K562 (cell line): ENCODE measurements at regions of chr12 and their contacts with region 1.

Region 1: DNA sequence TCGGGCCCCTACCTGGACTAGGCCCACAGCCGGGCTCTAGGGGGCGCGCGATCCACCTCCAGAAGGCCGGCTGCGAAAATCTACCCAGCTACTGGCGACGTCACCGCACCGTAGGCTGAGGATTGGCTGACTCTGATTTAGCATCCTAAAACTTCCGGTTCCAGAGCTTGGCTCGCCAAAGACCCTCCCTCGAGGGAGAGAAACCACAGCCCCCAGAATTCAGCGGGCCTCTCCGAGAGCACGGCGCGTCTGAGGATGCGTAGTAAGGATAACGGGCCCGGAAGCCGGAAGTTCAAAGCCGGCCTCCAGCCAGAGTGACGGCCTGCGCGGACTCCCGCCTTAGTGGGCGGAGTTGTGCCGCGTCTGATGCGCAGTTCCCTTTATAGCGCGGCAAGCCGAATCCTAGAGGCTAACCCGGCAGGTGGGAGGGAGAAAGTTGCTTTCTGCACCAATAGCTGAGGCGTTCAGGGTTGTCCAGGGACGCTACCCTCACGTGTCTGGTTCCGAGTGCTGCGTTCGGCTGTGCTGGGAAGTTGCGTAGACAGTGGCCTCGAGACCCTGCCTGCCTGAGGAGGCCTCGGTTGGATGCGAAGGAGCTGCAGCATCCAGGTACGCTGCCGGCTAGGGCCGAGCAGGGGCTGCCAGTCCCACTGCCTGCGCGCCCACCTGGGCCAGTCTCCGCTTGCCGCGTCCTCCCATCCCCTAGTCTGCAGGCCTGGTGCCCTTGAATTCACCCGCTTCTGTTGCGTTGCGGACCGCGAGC is at the start of gene COX14:
- DNase-seq: peak; percentile 93 to 99 (median 96)
- ATAC-seq: peak; percentile 92
- H3K4me3 ChIP-seq: peak within 1 kb of the TSS; percentile 78
- H3K27ac ChIP-seq: peak within 1 kb of the TSS; percentile 87
- H3K4me1 ChIP-seq: peaks cover 29 to 48% of the 10 kb centered on the region in 2 experiments
- H3K27me3 ChIP-seq: no peaks in the 10 kb centered on the region
- CTCF ChIP-seq: peak; percentile 90 to 96 (median 95)
- EP300 ChIP-seq: no peak
- POLR2A ChIP-seq: peak; percentile 90
- RAD21 ChIP-seq: peak in 1 of 2 experiments; percentile 52; a peak in 2 of 4 replicates
- polyA plus RNA-seq, gene COX14: 259 to 269 TPM

Region 2: DNA sequence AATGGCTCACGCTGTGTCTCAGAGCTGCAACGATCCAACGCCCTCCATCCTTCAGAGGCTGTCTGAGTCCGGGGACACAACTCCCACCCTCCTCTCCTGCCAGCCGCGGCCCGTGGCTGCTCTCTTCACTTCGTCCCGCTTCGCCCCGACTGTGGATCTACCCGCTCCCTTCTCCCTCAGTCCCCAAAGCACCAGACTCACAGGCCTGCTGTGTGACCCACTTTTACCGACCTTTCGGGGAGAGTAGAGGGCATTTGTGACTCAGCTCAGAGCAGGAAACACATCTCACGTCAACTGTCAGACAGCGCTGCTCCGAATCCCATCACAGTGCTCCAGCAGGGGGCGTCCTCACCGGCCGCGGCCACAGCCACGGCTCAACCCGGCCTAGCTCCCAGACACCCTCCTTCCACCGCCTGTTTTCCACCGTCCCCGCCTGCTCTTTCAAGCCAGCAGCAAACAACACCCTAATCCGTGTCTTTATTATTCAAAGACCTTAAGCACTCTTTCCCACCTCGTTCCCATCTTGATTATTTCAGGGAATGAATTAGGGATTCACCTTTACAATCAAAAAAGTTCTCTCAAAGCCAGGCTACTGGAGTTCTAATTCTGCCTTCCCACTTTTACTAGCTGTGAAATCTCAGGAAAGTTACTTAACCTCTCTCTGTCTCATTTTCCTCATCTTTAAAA is 166.3 kb before region 1 on chr12:
- CTCF ChIA-PET with region 1: no interaction called
- POLR2A ChIA-PET with region 1: no interaction called
- in situ Hi-C with region 1: no loop called
- intact Hi-C with region 1: no loop called
- DNase-seq: peak; percentile 90 to 92 (median 91)
- ATAC-seq: peak; percentile 99
- H3K4me3 ChIP-seq: no peak overlapping the region
- H3K27ac ChIP-seq: peak overlapping the region; percentile 35; the same call in 1 of the 3 replicates
- H3K4me1 ChIP-seq: peaks cover 14 to 20% of the 10 kb centered on the region in 2 experiments; a peak in 4 of 5 replicates
- H3K27me3 ChIP-seq: no peaks in the 10 kb centered on the region
- CTCF ChIP-seq: peak; percentile 87 to 95 (median 90)
- EP300 ChIP-seq: peak; percentile 54; the same call in 1 of the 2 replicates
- POLR2A ChIP-seq: 0 out of 2 replicates have a peak, but pooled peaks have one; percentile 19
- RAD21 ChIP-seq: peak; percentile 42 to 61

Region 3: DNA sequence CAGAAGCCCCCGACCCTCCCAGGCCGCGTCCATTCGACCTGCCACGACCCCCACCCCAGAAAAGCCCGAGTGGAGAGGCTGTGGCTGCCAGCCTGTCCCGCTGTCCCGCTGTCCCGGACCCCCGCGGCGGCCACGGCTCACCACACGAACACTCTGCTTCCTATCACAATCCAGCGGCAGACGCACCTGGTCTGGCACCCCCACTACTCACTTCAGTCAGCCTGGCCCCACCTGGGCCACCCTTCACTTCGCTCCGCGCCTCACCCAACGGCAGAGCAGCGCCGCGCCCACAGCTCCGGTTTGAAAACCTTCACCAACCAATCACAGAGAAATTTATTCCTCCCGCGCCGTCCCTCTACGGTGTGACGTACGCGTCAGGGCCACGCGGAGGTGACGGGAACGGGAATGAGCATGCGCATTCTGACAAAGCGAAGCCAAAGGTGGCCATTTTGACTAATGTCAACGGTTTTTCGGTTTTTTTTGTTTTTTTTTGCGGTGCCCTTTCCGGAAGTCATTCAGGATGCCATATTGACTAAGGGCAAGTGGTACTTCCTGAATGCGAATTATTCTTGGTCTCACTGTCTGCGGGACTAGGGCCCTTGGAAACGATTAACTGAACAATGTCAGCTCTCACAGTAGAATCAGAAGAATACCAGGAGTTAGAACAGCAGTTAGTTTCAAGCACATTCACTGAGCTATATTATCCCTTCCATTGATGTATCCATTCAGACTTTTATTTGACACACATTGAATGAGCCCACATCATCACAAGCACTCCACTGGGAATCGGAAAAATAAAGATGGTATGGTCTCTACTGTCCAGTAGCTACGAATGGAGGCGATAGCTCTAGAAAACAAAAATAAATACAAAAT is 86.5 kb before region 1 on chr12 and contains the start of gene RACGAP1:
- CTCF ChIA-PET with region 1: no interaction called
- POLR2A ChIA-PET with region 1: no interaction called
- in situ Hi-C with region 1: no loop called
- intact Hi-C with region 1: no loop called
- DNase-seq: peak; percentile 93 to 99 (median 96)
- ATAC-seq: peak; percentile 98
- H3K4me3 ChIP-seq: peak within 1 kb of the TSS; percentile 71
- H3K27ac ChIP-seq: peak within 1 kb of the TSS; percentile 89
- H3K4me1 ChIP-seq: peaks cover 7 to 11% of the 10 kb centered on the region in 2 experiments; a peak in 3 of 5 replicates
- H3K27me3 ChIP-seq: no peaks in the 10 kb centered on the region
- CTCF ChIP-seq: no peak
- EP300 ChIP-seq: peak; percentile 43
- POLR2A ChIP-seq: peak; percentile 91
- RAD21 ChIP-seq: no peak; a peak in 1 of 4 replicates
- polyA plus RNA-seq, gene RACGAP1: 56.4 to 71.8 TPM

Region 4: GRCh38 chr12:50127546-50127945 is 15.7 kb after region 1 on chr12:
- CTCF ChIA-PET with region 1: no interaction called
- POLR2A ChIA-PET with region 1: interaction called, 15 read pairs
- in situ Hi-C with region 1: no loop called
- intact Hi-C with region 1: no loop called
- DNase-seq: no peak
- ATAC-seq: peak; percentile 42; the same call in 2 of the 3 replicates
- H3K4me3 ChIP-seq: no peak overlapping the region
- H3K27ac ChIP-seq: no peak overlapping the region
- H3K4me1 ChIP-seq: no peaks in the 10 kb centered on the region
- H3K27me3 ChIP-seq: no peaks in the 10 kb centered on the region
- CTCF ChIP-seq: no peak
- EP300 ChIP-seq: no peak
- POLR2A ChIP-seq: no peak
- RAD21 ChIP-seq: no peak

Region 5: GRCh38 chr12:50149311-50149710 is 37.4 kb after region 1 on chr12:
- CTCF ChIA-PET with region 1: no interaction called
- POLR2A ChIA-PET with region 1: interaction called, 10 read pairs
- in situ Hi-C with region 1: no loop called
- intact Hi-C with region 1: no loop called
- DNase-seq: no peak
- ATAC-seq: no peak
- H3K4me3 ChIP-seq: no peak overlapping the region
- H3K27ac ChIP-seq: no peak overlapping the region
- H3K4me1 ChIP-seq: peaks cover 0 to 4% of the 10 kb centered on the region in 2 experiments; a peak in 1 of 5 replicates
- H3K27me3 ChIP-seq: no peaks in the 10 kb centered on the region
- CTCF ChIP-seq: no peak
- EP300 ChIP-seq: no peak
- POLR2A ChIP-seq: no peak
- RAD21 ChIP-seq: no peak